PC-3 (cell line): ENCODE measurements at regions of chr12 and their contacts with region 1.

Region 1: DNA sequence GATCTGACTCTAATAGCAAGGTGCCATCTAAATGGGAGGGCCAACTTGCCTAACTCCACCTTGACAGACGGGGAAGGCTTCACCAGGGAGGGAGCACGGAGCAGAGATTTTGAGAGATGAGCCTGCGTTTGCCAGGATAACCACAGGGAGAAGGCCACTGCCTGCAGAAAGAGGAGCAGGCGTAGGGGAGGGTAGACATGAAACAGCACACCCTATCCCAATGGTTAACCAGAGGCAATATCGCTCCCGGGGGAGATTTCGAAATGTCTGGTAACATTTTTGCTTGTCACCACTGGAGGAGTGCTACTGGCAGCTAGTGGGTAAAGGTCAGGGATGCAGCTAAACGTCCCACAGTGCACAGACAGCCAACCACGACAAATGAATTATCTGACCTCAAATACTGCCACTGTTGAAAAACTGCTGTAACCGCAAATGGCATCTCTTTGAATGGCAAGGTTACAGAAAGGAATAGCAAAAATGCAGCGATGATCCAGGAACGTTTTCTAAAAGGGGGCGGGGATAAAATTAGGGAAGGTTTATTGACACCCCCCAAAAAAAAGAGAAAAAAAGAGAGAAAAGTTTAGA is 126.0 kb upstream of the ATF7IP start:
- DNase-seq: peak; percentile 63
- ATAC-seq: peak; percentile 79
- H3K4me3 ChIP-seq: peak overlapping the region; percentile 51
- H3K27ac ChIP-seq: peak overlapping the region; percentile 69
- H3K4me1 ChIP-seq: peaks cover 18% of the 10 kb centered on the region
- H3K27me3 ChIP-seq: no peaks in the 10 kb centered on the region
- CTCF ChIP-seq: 0 out of 2 replicates have a peak, but pooled peaks have one; percentile 19

Region 2: DNA sequence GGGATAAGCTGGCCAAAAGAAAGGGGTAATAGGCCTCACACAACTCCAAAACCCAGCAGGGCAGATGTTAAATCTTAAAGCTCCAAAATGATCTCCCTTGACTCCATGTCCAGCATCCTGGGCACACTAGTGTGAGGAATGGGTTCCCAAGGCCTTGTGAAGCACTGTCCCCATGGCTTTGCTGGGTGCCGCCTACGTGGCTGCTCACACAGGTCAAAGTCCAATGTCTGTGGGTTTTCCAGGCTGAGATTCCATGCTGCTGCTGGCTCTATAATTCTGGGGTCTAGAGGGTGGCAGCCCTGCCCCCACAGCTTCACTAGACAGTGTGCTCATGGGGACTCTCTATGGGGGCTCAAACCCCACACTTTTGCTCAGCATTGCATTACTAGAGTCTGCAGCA is 112.8 kb before region 1 on chr12:
- CTCF ChIA-PET with region 1: no interaction called
- POLR2A ChIA-PET with region 1: no interaction called
- intact Hi-C with region 1: no loop called
- DNase-seq: no peak
- ATAC-seq: no peak
- H3K4me3 ChIP-seq: no peak overlapping the region
- H3K27ac ChIP-seq: no peak overlapping the region
- H3K4me1 ChIP-seq: no peaks in the 10 kb centered on the region
- H3K27me3 ChIP-seq: peaks cover 18% of the 10 kb centered on the region; the same call in 1 of the 2 replicates
- CTCF ChIP-seq: no peak

Region 3: GRCh38 chr12:14257734-14258574 is 18.5 kb after region 1 on chr12:
- CTCF ChIA-PET with region 1: no interaction called
- POLR2A ChIA-PET with region 1: no interaction called
- intact Hi-C with region 1: loop called (anchors 2 kb)
- DNase-seq: peak; percentile 97
- ATAC-seq: peak; percentile 69
- H3K4me3 ChIP-seq: no peak overlapping the region
- H3K27ac ChIP-seq: peak overlapping the region; percentile 94
- H3K4me1 ChIP-seq: peaks cover 52% of the 10 kb centered on the region
- H3K27me3 ChIP-seq: no peaks in the 10 kb centered on the region
- CTCF ChIP-seq: no peak

Region 4: GRCh38 chr12:14417715-14418114 is 178.3 kb after region 1 on chr12:
- CTCF ChIA-PET with region 1: interaction called, 5 read pairs
- POLR2A ChIA-PET with region 1: no interaction called
- intact Hi-C with region 1: loop called (anchors 1 kb)
- DNase-seq: peak; percentile 54
- ATAC-seq: peak; percentile 50; the same call in 1 of the 2 replicates
- H3K4me3 ChIP-seq: no peak overlapping the region
- H3K27ac ChIP-seq: no peak overlapping the region
- H3K4me1 ChIP-seq: peaks cover 11% of the 10 kb centered on the region; the same call in 1 of the 2 replicates
- H3K27me3 ChIP-seq: no peaks in the 10 kb centered on the region
- CTCF ChIP-seq: no peak

Region 5: DNA sequence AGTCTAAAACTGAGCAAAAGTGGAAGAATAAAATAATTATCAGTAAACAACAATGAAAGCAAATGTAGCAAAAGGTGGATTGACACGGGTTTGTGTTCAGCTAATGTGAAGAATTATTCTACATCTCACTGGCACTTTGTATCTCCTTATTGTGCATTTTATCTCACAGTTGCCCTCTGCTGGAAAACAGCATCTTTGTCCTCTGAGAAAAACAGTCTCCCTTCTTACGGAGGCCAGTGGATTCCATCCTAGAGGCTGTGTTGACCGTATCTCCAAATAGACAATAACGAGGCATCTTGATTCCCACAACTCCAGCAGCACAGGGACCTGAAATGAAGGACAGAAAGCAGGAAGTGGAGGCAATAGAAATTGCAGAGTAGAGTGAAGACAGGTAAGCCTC is 379.5 kb after region 1 on chr12:
- CTCF ChIA-PET with region 1: interaction called, 5 read pairs
- POLR2A ChIA-PET with region 1: no interaction called
- intact Hi-C with region 1: loop called (anchors 1 kb)
- DNase-seq: peak; percentile 30
- ATAC-seq: peak; percentile 42; the same call in 1 of the 2 replicates
- H3K4me3 ChIP-seq: no peak overlapping the region
- H3K27ac ChIP-seq: no peak overlapping the region
- H3K4me1 ChIP-seq: no peaks in the 10 kb centered on the region
- H3K27me3 ChIP-seq: no peaks in the 10 kb centered on the region
- CTCF ChIP-seq: peak; percentile 62